ENCODE measurements at regions of chr17 and their contacts with region 1.

Region 1: DNA sequence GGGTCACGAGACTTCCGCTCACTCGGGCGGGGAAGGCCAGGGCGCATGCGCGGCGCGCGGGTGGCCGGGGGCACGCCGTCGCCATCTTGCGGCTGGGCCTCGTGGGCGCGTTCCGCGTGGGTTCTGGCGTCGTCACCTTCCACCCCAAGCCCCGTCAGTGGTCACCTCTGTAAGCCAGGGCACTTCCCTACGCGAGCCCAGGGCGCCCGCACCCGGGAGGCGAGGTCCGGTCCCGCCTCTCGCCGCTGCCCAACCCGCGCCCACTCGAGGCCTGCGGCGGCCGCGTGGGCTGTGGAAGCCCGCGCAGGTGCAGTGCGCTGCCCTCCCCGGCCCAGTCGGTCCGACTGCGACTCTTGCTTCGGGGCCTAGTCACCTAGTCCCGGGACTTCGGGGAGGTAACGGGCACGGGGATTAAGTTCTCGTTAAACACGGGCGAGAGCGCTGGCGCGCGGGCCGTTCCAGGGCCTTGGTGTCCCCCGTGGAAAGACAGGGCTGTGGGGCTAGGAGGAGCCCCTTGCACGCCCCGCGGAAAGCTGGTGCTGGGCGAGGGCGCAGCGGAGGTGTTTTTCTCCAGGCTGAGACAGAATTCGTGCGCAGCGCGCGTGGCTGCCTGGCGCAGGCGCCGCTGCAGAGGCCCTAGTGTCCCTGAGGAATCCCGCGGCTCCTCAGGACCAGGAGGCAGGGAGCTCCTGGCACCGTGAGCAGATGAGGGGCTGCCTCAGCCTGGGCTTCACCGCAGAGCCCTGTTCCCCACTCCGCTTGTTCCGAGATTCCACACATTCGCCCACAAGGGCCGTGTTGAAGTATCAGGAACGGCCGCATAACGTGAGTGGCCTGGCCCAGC is 472 bp upstream of the ARHGDIA start:
- DNase-seq: peak; percentile 100
- H3K4me3 ChIP-seq: peak overlapping the region; percentile 82 to 83
- H3K27ac ChIP-seq: peak overlapping the region; percentile 95
- H3K4me1 ChIP-seq: peaks cover 24 to 40% of the 10 kb centered on the region in 2 experiments; a peak in 3 of 4 replicates
- H3K27me3 ChIP-seq: no peaks in the 10 kb centered on the region
- CTCF ChIP-seq: peak; percentile 37; the same call in 1 of the 2 replicates
- EP300 ChIP-seq: 0 out of 4 replicates have a peak, but pooled peaks of 1 of the 2 experiments have one; percentile 6
- RAD21 ChIP-seq: no peak

Region 2: GRCh38 chr17:81711814-81712467 is 159.7 kb before region 1 on chr17 and contains the start of gene SLC25A10:
- CTCF ChIA-PET with region 1: interaction called, 10 read pairs
- POLR2A ChIA-PET with region 1: interaction called, 9 read pairs
- DNase-seq: peak; percentile 99
- H3K4me3 ChIP-seq: peak within 1 kb of the TSS; percentile 73 to 80
- H3K27ac ChIP-seq: peak within 1 kb of the TSS; percentile 36 to 83
- H3K4me1 ChIP-seq: peaks cover 22 to 33% of the 10 kb centered on the region in 2 experiments; a peak in 3 of 4 replicates
- H3K27me3 ChIP-seq: no peaks in the 10 kb centered on the region
- CTCF ChIP-seq: no peak
- EP300 ChIP-seq: no peak
- RAD21 ChIP-seq: no peak
- polyA plus RNA-seq, gene SLC25A10: 29.9 and 34.7 TPM in 2 replicates

Region 3: GRCh38 chr17:81808778-81809555 is 62.6 kb before region 1 on chr17:
- CTCF ChIA-PET with region 1: interaction called, 14 read pairs
- POLR2A ChIA-PET with region 1: interaction called, 3 read pairs
- DNase-seq: peak; percentile 77
- H3K4me3 ChIP-seq: no peak overlapping the region
- H3K27ac ChIP-seq: no peak overlapping the region
- H3K4me1 ChIP-seq: peaks cover 0 to 35% of the 10 kb centered on the region in 2 experiments; a peak in 1 of 4 replicates
- H3K27me3 ChIP-seq: peaks cover 70% of the 10 kb centered on the region
- CTCF ChIP-seq: peak; percentile 37
- EP300 ChIP-seq: no peak
- RAD21 ChIP-seq: no peak

Region 4: GRCh38 chr17:81821603-81822311 is 49.9 kb before region 1 on chr17:
- CTCF ChIA-PET with region 1: no interaction called
- POLR2A ChIA-PET with region 1: no interaction called
- DNase-seq: peak; percentile 82
- H3K4me3 ChIP-seq: no peak overlapping the region
- H3K27ac ChIP-seq: peak overlapping the region in 1 of 2 experiments; percentile 23; a peak in 1 of 4 replicates
- H3K4me1 ChIP-seq: peaks cover 0 to 11% of the 10 kb centered on the region in 2 experiments; a peak in 1 of 4 replicates
- H3K27me3 ChIP-seq: no peaks in the 10 kb centered on the region; the same call in 1 of the 2 replicates
- CTCF ChIP-seq: peak; percentile 55
- EP300 ChIP-seq: no peak
- RAD21 ChIP-seq: peak; percentile 46

Region 5: GRCh38 chr17:81846743-81847689 is 24.6 kb before region 1 on chr17:
- CTCF ChIA-PET with region 1: interaction called, 10 read pairs
- POLR2A ChIA-PET with region 1: no interaction called
- DNase-seq: no peak
- H3K4me3 ChIP-seq: no peak overlapping the region
- H3K27ac ChIP-seq: no peak overlapping the region
- H3K4me1 ChIP-seq: no peaks in the 10 kb centered on the region
- H3K27me3 ChIP-seq: no peaks in the 10 kb centered on the region
- CTCF ChIP-seq: no peak
- EP300 ChIP-seq: no peak
- RAD21 ChIP-seq: no peak

Region 6: GRCh38 chr17:81890447-81891299 is 19.1 kb after region 1 on chr17:
- CTCF ChIA-PET with region 1: interaction called, 54 read pairs
- POLR2A ChIA-PET with region 1: interaction called, 7 read pairs
- DNase-seq: peak; percentile 76
- H3K4me3 ChIP-seq: peak overlapping the region; percentile 72 to 98
- H3K27ac ChIP-seq: peak overlapping the region; percentile 51 to 67
- H3K4me1 ChIP-seq: peaks cover 12 to 19% of the 10 kb centered on the region in 2 experiments
- H3K27me3 ChIP-seq: no peaks in the 10 kb centered on the region
- CTCF ChIP-seq: no peak
- EP300 ChIP-seq: no peak
- RAD21 ChIP-seq: no peak

Region 7: DNA sequence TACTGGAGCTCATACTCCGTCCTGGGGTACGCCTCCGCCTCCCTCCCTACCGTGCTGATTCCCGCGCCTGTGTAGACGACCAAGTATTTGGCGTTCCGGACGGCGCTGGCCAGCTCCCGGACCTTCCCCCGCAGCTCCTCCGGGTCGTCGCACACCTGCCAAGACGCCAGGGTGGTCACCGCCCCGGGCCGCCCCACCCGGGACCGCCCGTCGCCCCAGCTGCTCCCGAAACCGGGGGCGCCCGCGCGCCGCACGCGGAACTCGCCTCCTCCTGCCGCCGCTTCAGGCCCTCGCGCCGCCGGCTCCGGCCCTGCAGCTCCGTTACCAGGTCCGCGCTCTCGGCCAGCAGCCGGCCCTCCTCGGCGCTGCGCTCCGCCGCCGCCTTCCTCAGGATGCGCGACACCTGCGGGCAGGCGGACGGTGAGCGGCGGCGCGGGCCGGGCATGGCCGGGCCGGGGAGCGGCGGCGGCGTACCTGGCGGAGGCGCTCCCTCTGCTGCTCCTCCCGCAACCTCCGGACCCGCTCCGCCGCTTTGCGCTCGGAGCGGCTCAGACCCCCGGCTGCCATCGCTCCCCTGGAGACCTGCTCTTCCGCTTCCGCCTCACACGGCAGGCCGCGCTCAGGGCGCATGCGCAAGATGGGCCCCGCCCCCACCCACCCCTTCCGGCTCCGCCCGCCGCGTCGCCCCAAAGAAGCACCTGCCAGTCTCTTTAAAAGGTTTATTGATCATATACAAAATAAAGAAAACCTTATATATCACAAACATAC is 46.1 kb after region 1 on chr17 and contains the start of gene SIRT7:
- CTCF ChIA-PET with region 1: interaction called, 20 read pairs
- POLR2A ChIA-PET with region 1: interaction called, 3 read pairs
- DNase-seq: peak; percentile 100
- H3K4me3 ChIP-seq: peak within 1 kb of the TSS; percentile 89 to 100
- H3K27ac ChIP-seq: peak within 1 kb of the TSS; percentile 4 to 71; a peak in 3 of 4 replicates
- H3K4me1 ChIP-seq: peaks cover 7 to 21% of the 10 kb centered on the region in 2 experiments; a peak in 3 of 4 replicates
- H3K27me3 ChIP-seq: no peaks in the 10 kb centered on the region
- CTCF ChIP-seq: no peak
- EP300 ChIP-seq: no peak
- RAD21 ChIP-seq: no peak
- polyA plus RNA-seq, gene SIRT7: 32.6 and 34.1 TPM in 2 replicates

Measured in SK-N-SH (cell line).